Calu3 (cell line): ENCODE measurements at regions of chr14 and their contacts with region 1.

Region 1: DNA sequence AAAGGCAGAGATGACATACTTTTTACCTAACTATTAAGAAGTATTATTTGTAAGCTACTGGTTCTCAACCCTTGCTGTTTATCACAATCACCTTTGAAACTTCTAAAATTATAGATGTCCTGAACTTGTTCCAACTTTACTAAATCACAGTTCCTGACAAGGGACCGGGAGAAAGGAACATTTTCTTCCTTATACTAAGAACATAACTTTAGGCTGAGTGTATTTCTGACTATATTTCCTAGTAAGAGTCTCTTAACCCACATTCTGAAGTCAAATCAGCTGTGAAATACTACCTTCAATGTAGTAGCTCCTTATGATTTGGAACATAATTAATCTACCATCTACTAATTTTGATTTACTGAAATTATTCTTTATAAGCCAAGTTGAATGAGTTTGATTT is 80.2 kb downstream of the BAZ1A start:
- DNase-seq: no peak
- H3K4me3 Mint-ChIP-seq: no peak overlapping the region
- H3K27ac Mint-ChIP-seq: no peak overlapping the region
- H3K4me1 Mint-ChIP-seq: no peaks in the 10 kb centered on the region
- H3K27me3 Mint-ChIP-seq: no peaks in the 10 kb centered on the region
- CTCF ChIP-seq: no peak

Region 2: DNA sequence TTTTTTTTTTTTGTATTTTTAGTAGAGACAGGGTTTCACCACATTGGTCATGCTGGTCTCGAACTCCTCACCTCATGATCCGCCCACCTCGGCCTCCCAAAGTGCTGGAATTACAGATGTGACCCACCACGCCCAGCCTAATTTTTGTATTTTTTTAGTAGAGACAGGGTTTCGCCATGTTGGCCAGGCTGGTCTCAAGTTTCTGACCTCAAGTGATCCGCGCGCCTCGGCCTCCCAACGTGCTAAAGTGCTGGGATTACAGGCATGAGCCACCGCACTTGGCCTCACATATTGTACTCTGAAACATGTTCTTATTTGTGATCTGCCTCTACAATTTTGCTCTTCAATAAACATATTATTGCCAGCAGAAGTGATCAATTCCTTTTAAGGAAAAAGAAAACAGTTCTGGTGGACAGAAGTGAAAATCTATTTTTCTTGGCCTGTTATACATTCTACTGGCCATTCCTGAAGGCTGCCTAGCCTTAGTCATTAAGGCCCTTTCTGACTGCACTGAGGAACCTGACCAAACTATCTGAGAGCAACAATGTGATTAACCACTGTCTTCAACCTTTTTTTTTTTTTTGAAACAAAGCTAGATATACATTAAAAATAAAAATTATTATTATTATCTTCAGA is 201.1 kb before region 1 on chr14:
- CTCF ChIA-PET with region 1: no interaction called
- intact Hi-C with region 1: no loop called
- DNase-seq: no peak
- H3K4me3 Mint-ChIP-seq: no peak overlapping the region
- H3K27ac Mint-ChIP-seq: no peak overlapping the region
- H3K4me1 Mint-ChIP-seq: no peaks in the 10 kb centered on the region
- H3K27me3 Mint-ChIP-seq: no peaks in the 10 kb centered on the region
- CTCF ChIP-seq: no peak

Region 3: GRCh38 chr14:34755215-34755614 is 39.7 kb before region 1 on chr14:
- CTCF ChIA-PET with region 1: interaction called, 10 read pairs
- intact Hi-C with region 1: no loop called
- DNase-seq: no peak
- H3K4me3 Mint-ChIP-seq: no peak overlapping the region
- H3K27ac Mint-ChIP-seq: no peak overlapping the region
- H3K4me1 Mint-ChIP-seq: no peaks in the 10 kb centered on the region
- H3K27me3 Mint-ChIP-seq: no peaks in the 10 kb centered on the region
- CTCF ChIP-seq: no peak